ENCODE measurements at regions of chr3 and their contacts with region 1.

Region 1: GRCh38 chr3:128969993-128970739 is 23.7 kb downstream of the CFAP92 start:
- DNase-seq: peak in 1 of 2 experiments; percentile 78
- H3K4me3 ChIP-seq: no peak overlapping the region
- H3K27ac ChIP-seq: no peak overlapping the region
- H3K4me1 ChIP-seq: no peaks in the 10 kb centered on the region
- H3K27me3 ChIP-seq: no peaks in the 10 kb centered on the region; a peak in 1 of 7 replicates
- CTCF ChIP-seq: peak; percentile 75 to 84 (median 81)
- EP300 ChIP-seq: no peak
- POLR2A ChIP-seq: no peak
- RAD21 ChIP-seq: peak; percentile 92 to 95

Region 2: GRCh38 chr3:128617557-128618397 is 352.4 kb before region 1 on chr3:
- CTCF ChIA-PET with region 1: no interaction called
- POLR2A ChIA-PET with region 1: no interaction called
- DNase-seq: peak; percentile 84 to 97
- H3K4me3 ChIP-seq: peak overlapping the region; percentile 71 to 94 (median 86)
- H3K27ac ChIP-seq: peak overlapping the region; percentile 77
- H3K4me1 ChIP-seq: peaks cover 0 to 7% (median 5%) of the 10 kb centered on the region in 4 experiments; a peak in 6 of 7 replicates
- H3K27me3 ChIP-seq: no peaks in the 10 kb centered on the region
- CTCF ChIP-seq: peak in 2 of 3 experiments; percentile 52 to 90; a peak in 3 of 4 replicates
- EP300 ChIP-seq: no peak; a peak in 1 of 3 replicates
- POLR2A ChIP-seq: peak in 1 of 2 experiments; percentile 72; a peak in 2 of 3 replicates
- RAD21 ChIP-seq: peak; percentile 55 to 65

Region 3: GRCh38 chr3:128720891-128721290 is 249.3 kb before region 1 on chr3:
- CTCF ChIA-PET with region 1: no interaction called
- POLR2A ChIA-PET with region 1: no interaction called
- DNase-seq: no peak
- H3K4me3 ChIP-seq: peak overlapping the region in 2 of 4 experiments; percentile 1 to 34; a peak in 2 of 8 replicates
- H3K27ac ChIP-seq: no peak overlapping the region
- H3K4me1 ChIP-seq: peaks cover 6 to 31% (median 15%) of the 10 kb centered on the region in 4 experiments
- H3K27me3 ChIP-seq: no peaks in the 10 kb centered on the region; a peak in 1 of 7 replicates
- CTCF ChIP-seq: no peak
- EP300 ChIP-seq: no peak
- POLR2A ChIP-seq: no peak
- RAD21 ChIP-seq: no peak

Region 4: GRCh38 chr3:128932516-128933212 is 37.5 kb before region 1 on chr3:
- CTCF ChIA-PET with region 1: interaction called, 12 read pairs
- POLR2A ChIA-PET with region 1: no interaction called
- DNase-seq: peak in 1 of 2 experiments; percentile 33
- H3K4me3 ChIP-seq: no peak overlapping the region
- H3K27ac ChIP-seq: no peak overlapping the region
- H3K4me1 ChIP-seq: no peaks in the 10 kb centered on the region
- H3K27me3 ChIP-seq: no peaks in the 10 kb centered on the region
- CTCF ChIP-seq: no peak
- EP300 ChIP-seq: no peak
- POLR2A ChIP-seq: no peak
- RAD21 ChIP-seq: no peak

Region 5: GRCh38 chr3:128993461-128994173 is 23.5 kb after region 1 on chr3 and contains the start of gene CFAP92:
- CTCF ChIA-PET with region 1: interaction called, 40 read pairs
- POLR2A ChIA-PET with region 1: interaction called, 3 read pairs
- DNase-seq: peak; percentile 41 to 96
- H3K4me3 ChIP-seq: peak within 1 kb of the TSS; percentile 42 to 62 (median 51)
- H3K27ac ChIP-seq: no peak within 1 kb of the TSS
- H3K4me1 ChIP-seq: peaks cover 2 to 14% (median 8%) of the 10 kb centered on the region in 4 experiments
- H3K27me3 ChIP-seq: peaks cover 0 to 19% (median 17%) of the 10 kb centered on the region in 4 experiments; a peak in 6 of 7 replicates
- CTCF ChIP-seq: peak in 1 of 3 experiments; percentile 11; a peak in 1 of 4 replicates
- EP300 ChIP-seq: no peak
- POLR2A ChIP-seq: no peak
- RAD21 ChIP-seq: no peak; a peak in 1 of 4 replicates
- total RNA-seq, gene CFAP92: 2.0 and 2.4 TPM in 2 replicates

Region 6: GRCh38 chr3:129026728-129027543 is 56.8 kb after region 1 on chr3:
- CTCF ChIA-PET with region 1: interaction called, 58 read pairs
- POLR2A ChIA-PET with region 1: interaction called, 7 read pairs
- DNase-seq: peak; percentile 73 to 81
- H3K4me3 ChIP-seq: peak overlapping the region in 3 of 4 experiments; percentile 11 to 52 (median 14); a peak in 6 of 8 replicates
- H3K27ac ChIP-seq: no peak overlapping the region
- H3K4me1 ChIP-seq: peaks cover 0 to 4% (median 0%) of the 10 kb centered on the region in 4 experiments; a peak in 3 of 7 replicates
- H3K27me3 ChIP-seq: peaks cover 5 to 23% (median 19%) of the 10 kb centered on the region in 4 experiments
- CTCF ChIP-seq: peak; percentile 27 to 42 (median 32)
- EP300 ChIP-seq: no peak
- POLR2A ChIP-seq: no peak
- RAD21 ChIP-seq: peak in 1 of 2 experiments; percentile 28; a peak in 2 of 4 replicates

Region 7: GRCh38 chr3:129068291-129068886 is 98.2 kb after region 1 on chr3:
- CTCF ChIA-PET with region 1: interaction called, 19 read pairs
- POLR2A ChIA-PET with region 1: no interaction called
- DNase-seq: no peak
- H3K4me3 ChIP-seq: peak overlapping the region in 2 of 4 experiments; percentile 23 to 51; a peak in 6 of 8 replicates
- H3K27ac ChIP-seq: no peak overlapping the region
- H3K4me1 ChIP-seq: no peaks in the 10 kb centered on the region
- H3K27me3 ChIP-seq: no peaks in the 10 kb centered on the region
- CTCF ChIP-seq: no peak
- EP300 ChIP-seq: no peak
- POLR2A ChIP-seq: no peak
- RAD21 ChIP-seq: no peak

Region 8: DNA sequence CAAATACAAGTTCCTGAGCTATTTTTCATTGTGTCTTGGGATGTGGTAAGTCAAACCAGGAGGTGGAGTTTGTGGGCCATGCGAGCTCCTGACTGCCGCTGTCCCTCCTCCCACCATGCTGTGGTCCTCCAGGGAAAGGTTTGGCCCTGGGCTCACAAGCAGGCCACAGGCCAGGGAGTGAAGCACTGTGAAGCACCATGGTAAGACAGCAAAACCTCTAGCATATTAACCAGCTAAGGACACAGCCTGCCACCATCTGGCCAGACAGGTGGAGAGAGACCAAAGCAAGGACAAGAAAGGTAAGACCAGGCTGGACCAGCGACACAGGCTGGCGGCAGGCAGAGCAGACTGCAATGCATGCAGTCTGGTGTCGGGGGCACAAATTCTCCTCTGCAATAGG is 136.2 kb after region 1 on chr3:
- CTCF ChIA-PET with region 1: interaction called, 16 read pairs
- POLR2A ChIA-PET with region 1: no interaction called
- DNase-seq: no peak
- H3K4me3 ChIP-seq: no peak overlapping the region
- H3K27ac ChIP-seq: no peak overlapping the region
- H3K4me1 ChIP-seq: no peaks in the 10 kb centered on the region
- H3K27me3 ChIP-seq: no peaks in the 10 kb centered on the region
- CTCF ChIP-seq: peak in 1 of 3 experiments; percentile 30; a peak in 1 of 4 replicates
- EP300 ChIP-seq: no peak
- POLR2A ChIP-seq: no peak
- RAD21 ChIP-seq: peak; percentile 25 to 44; a peak in 3 of 4 replicates

Region 9: DNA sequence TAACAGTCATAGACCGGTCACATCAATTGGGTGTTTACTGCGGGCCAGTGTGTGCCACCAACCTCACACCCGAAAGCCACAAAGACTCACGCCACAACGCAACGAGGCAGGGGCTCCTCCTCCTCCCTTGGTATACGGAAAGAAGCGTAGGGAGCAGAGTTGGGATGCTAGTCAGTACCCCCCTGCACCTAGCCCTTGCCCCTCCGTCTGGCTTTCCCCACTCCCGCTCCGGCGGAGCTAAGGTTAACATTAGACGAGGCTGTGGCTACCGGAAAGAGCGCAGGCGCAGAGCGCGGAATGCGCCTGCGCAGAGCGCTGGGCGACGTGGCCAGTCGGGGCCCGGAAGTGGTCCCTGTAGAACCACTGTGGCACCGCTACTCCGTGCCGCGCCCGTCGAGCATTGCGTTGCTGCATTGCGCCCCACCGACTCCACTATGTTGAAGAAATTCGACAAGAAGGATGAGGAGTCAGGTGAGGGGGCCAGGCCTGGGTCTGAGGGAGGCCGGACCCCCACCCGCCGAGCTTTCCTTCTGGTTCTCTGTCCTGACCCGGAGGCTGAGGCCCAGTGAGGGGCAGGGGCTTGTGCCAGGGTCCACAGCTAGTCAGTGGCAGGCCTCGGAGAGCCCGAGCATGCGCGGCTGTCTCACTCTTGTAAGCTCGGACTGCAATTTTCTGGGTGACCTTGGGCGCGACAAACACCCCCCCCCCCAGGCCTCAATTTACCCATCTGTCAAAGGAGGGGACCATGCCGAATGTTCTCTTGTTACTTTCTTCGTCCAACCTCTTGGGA is 279.3 kb after region 1 on chr3 and contains the start of gene COPG1:
- CTCF ChIA-PET with region 1: interaction called, 32 read pairs
- POLR2A ChIA-PET with region 1: no interaction called
- DNase-seq: peak; percentile 73 to 90
- H3K4me3 ChIP-seq: peak within 1 kb of the TSS; percentile 75 to 93 (median 87)
- H3K27ac ChIP-seq: peak within 1 kb of the TSS; percentile 66
- H3K4me1 ChIP-seq: peaks cover 0 to 6% (median 1%) of the 10 kb centered on the region in 4 experiments; a peak in 4 of 7 replicates
- H3K27me3 ChIP-seq: no peaks in the 10 kb centered on the region
- CTCF ChIP-seq: peak in 1 of 3 experiments; percentile 7; a peak in 1 of 4 replicates
- EP300 ChIP-seq: no peak
- POLR2A ChIP-seq: peak; percentile 82 to 94
- RAD21 ChIP-seq: no peak
- total RNA-seq, gene COPG1: 104 and 106 TPM in 2 replicates

Measured in H1 (cell line).